Activated T-helper 1 cell treated with anti-CD3 and anti-CD28 coated beads, Interleukin-12 subunit alpha, Interleukin-12 subunit beta, Interleukin-2, Interleukin-4 antibody, amounts not matched to agents 30 ng/mL and 10 ng/mL and 1 ng/mL, durations not matched to agents 14 hours and 24 hours and 36 hours (primary cell): ENCODE measurements at regions of chr12 and their contacts with region 1.

Region 1: GRCh38 chr12:96343347-96343954 is 56.8 kb downstream of the CDK17 start:
- DNase-seq: peak; percentile 21
- H3K4me3 Mint-ChIP-seq: peak overlapping the region; percentile 24
- H3K27ac Mint-ChIP-seq: peak overlapping the region; percentile 79
- H3K4me1 Mint-ChIP-seq: peaks cover 54% of the 10 kb centered on the region
- H3K27me3 Mint-ChIP-seq: no peaks in the 10 kb centered on the region

Region 2: DNA sequence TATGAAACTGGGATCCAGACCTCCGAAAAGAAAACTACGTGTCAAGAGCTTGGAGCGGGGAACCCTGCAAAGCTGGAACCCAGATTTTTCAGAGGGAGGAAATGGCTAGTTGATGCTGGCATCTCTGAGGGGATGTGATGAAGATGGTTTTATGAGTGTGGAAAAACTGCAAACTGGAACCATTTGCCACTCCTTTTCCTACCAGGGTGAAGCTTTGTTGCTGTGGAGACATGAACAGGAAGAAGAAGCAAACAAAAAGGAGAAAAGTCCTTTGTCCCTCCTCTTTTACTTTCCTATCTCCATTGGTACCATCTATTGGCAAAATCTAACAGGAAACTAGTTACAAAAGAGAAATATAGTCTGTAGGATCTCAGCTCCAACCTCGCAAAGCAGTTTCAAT is 17.6 kb after region 1 on chr12:
- intact Hi-C with region 1: loop called (anchors 2 kb)
- DNase-seq: no peak
- H3K4me3 Mint-ChIP-seq: no peak overlapping the region
- H3K27ac Mint-ChIP-seq: no peak overlapping the region
- H3K4me1 Mint-ChIP-seq: peaks cover 35% of the 10 kb centered on the region
- H3K27me3 Mint-ChIP-seq: no peaks in the 10 kb centered on the region

Region 3: GRCh38 chr12:96375841-96376604 is 32.6 kb after region 1 on chr12:
- intact Hi-C with region 1: loop called (anchors 5 kb)
- DNase-seq: no peak
- H3K4me3 Mint-ChIP-seq: no peak overlapping the region
- H3K27ac Mint-ChIP-seq: no peak overlapping the region
- H3K4me1 Mint-ChIP-seq: peaks cover 69% of the 10 kb centered on the region
- H3K27me3 Mint-ChIP-seq: no peaks in the 10 kb centered on the region

Region 4: GRCh38 chr12:96652870-96653269 is 309.4 kb after region 1 on chr12:
- intact Hi-C with region 1: no loop called
- DNase-seq: no peak
- H3K4me3 Mint-ChIP-seq: no peak overlapping the region
- H3K27ac Mint-ChIP-seq: no peak overlapping the region
- H3K4me1 Mint-ChIP-seq: no peaks in the 10 kb centered on the region
- H3K27me3 Mint-ChIP-seq: peaks cover 3% of the 10 kb centered on the region